Adrenal gland (tissue), 19 donors: ENCODE measurements at regions of chr2 and their contacts with region 1.

Region 1: GRCh38 chr2:234544659-234545611 is 48.1 kb upstream of the ARL4C start:
- DNase-seq: peak; percentile 50 to 87 (median 60)
- H3K4me3 ChIP-seq: no peak overlapping the region
- H3K27ac ChIP-seq: no peak overlapping the region
- H3K4me1 ChIP-seq: no peaks in the 10 kb centered on the region
- H3K27me3 ChIP-seq: peaks cover under 1% of the 10 kb centered on the region
- CTCF ChIP-seq: peak; percentile 61 to 90 (median 84)
- POLR2A ChIP-seq: no peak

Region 2: GRCh38 chr2:233976690-233977294 is 568.1 kb before region 1 on chr2:
- intact Hi-C with region 1: loop called in 1 of 2 experiments (anchors 10 kb)
- DNase-seq: no peak
- H3K4me3 ChIP-seq: no peak overlapping the region
- H3K27ac ChIP-seq: no peak overlapping the region
- H3K4me1 ChIP-seq: peaks cover 0 to 3% of the 10 kb centered on the region in 2 donors
- H3K27me3 ChIP-seq: peaks cover 7% of the 10 kb centered on the region
- CTCF ChIP-seq: peak in 5 of 6 experiments; percentile 30 to 39 (median 38)
- POLR2A ChIP-seq: no peak

Region 3: GRCh38 chr2:235106874-235107639 is 562.1 kb after region 1 on chr2:
- intact Hi-C with region 1: loop called (anchors 5 kb)
- DNase-seq: peak; percentile 51 to 87 (median 65)
- H3K4me3 ChIP-seq: no peak overlapping the region
- H3K27ac ChIP-seq: no peak overlapping the region
- H3K4me1 ChIP-seq: no peaks in the 10 kb centered on the region
- H3K27me3 ChIP-seq: no peaks in the 10 kb centered on the region
- CTCF ChIP-seq: peak; percentile 32 to 71 (median 64)
- POLR2A ChIP-seq: no peak